ENCODE measurements at regions of chr13 and their contacts with region 1.

Region 1: DNA sequence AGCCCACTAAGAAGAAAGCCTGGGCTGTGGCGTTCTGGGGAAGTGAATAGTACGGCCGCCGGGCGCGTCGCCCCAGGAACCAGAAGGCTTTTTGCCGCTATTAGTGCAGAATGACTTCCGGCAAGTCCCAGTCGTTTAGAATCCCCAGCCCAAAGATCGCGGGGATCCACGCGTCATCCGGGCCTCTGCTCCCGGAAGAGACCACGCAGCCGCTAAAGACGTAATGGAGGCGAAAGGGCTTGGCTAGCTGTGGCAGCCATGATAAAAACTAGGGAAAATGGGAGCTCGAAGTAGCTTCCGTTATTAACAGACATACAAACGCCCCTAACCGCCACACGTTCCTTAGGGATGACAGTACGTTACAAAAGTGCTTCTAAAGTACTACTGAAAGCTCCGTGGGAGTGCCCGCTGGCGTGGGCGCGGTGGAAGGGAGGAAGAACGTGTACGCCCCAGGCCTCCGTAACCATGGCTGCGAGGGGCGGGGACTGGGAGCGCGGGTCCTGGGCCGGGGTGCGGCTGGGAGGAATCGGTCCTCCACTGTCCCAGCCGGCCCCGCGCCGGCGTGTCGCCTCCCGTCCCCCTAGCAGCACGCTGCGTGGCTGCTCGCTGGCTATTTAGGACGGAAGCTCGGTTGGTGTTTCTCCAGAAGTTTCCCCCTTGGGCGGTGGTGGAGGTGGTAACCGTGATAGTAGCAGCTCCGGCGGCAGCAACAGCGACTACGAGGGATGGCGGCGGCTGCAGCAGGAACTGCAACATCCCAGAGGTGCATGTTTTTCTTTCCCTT is at the start of gene SUGT1:
- DNase-seq: peak; percentile 97
- ATAC-seq: peak; percentile 96
- H3K4me3 Mint-ChIP-seq: no peak within 1 kb of the TSS
- H3K27ac Mint-ChIP-seq: no peak within 1 kb of the TSS
- H3K4me1 Mint-ChIP-seq: peaks cover 14% of the 10 kb centered on the region
- H3K27me3 Mint-ChIP-seq: no peaks in the 10 kb centered on the region
- total RNA-seq, gene SUGT1: 58.3 to 64.8 TPM

Region 2: DNA sequence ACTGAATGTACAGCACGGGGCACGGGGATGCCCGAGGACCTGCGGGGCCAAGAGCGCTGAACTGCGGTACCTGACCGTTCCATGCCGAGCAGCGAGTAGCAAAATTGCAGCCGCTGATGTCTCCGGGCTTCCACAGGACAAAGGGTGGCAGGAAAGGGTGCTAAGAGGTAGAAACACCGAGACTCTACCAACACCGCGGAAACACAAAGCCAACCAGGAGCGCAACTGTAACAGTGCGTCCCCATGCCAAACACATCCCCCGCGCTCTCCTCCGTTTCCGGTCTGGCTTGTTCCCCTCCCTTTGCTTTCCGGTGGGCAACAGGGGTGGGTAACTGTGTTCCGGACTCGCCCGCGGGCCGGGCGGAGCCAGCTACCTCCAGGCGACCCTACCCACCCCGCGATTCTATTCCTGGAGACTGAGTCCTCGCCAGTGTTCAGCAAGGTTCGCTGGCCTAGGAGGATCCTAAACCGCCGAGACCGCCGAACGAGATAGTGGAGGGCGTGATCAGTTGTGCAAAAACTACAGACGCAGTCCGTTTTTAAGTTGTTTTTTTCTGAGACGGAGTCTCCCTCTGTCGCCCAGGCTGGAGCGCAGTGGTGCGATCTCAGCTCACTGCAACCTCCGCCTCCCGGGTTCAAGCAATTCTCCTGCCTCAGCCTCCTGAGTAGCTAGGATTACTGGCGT is 458.1 kb before region 1 on chr13:
- CTCF ChIA-PET with region 1: no interaction called
- POLR2A ChIA-PET with region 1: no interaction called
- intact Hi-C with region 1: loop called in 1 of 2 experiments (anchors 1 kb)
- DNase-seq: peak; percentile 92
- ATAC-seq: peak; percentile 83
- H3K4me3 Mint-ChIP-seq: peak overlapping the region; percentile 86
- H3K27ac Mint-ChIP-seq: peak overlapping the region; percentile 100
- H3K4me1 Mint-ChIP-seq: peaks cover 32% of the 10 kb centered on the region
- H3K27me3 Mint-ChIP-seq: no peaks in the 10 kb centered on the region

Region 3: GRCh38 chr13:52617070-52618060 is 35.0 kb before region 1 on chr13:
- CTCF ChIA-PET with region 1: interaction called, 29 read pairs
- POLR2A ChIA-PET with region 1: interaction called, 17 read pairs
- intact Hi-C with region 1: loop called (anchors 1 kb)
- DNase-seq: peak; percentile 91
- ATAC-seq: peak; percentile 96
- H3K4me3 Mint-ChIP-seq: peak overlapping the region; percentile 95
- H3K27ac Mint-ChIP-seq: peak overlapping the region; percentile 94
- H3K4me1 Mint-ChIP-seq: peaks cover 33% of the 10 kb centered on the region
- H3K27me3 Mint-ChIP-seq: no peaks in the 10 kb centered on the region

Region 4: DNA sequence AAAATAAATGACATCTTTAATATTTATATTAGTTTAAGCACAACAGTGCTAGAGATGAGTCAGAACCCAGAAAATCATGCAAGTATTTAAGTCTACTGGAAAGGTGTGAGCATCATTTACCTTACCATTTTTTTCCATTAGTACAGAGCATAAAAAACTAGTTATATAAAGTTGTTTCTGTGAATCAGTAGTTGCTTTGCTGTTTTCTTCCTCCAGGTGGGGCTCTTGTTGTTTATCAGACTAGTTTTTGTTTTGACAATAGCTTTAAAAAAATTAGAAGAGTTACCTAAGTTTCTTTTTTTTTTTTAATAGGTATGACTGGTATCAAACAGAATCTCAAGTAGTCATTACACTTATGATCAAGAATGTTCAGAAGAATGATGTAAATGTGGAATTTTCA is 12.9 kb after region 1 on chr13:
- CTCF ChIA-PET with region 1: interaction called, 53 read pairs
- POLR2A ChIA-PET with region 1: interaction called, 5 read pairs
- intact Hi-C with region 1: no loop called
- DNase-seq: no peak
- ATAC-seq: peak; percentile 26
- H3K4me3 Mint-ChIP-seq: no peak overlapping the region
- H3K27ac Mint-ChIP-seq: no peak overlapping the region
- H3K4me1 Mint-ChIP-seq: peaks cover 4% of the 10 kb centered on the region
- H3K27me3 Mint-ChIP-seq: no peaks in the 10 kb centered on the region

Region 5: DNA sequence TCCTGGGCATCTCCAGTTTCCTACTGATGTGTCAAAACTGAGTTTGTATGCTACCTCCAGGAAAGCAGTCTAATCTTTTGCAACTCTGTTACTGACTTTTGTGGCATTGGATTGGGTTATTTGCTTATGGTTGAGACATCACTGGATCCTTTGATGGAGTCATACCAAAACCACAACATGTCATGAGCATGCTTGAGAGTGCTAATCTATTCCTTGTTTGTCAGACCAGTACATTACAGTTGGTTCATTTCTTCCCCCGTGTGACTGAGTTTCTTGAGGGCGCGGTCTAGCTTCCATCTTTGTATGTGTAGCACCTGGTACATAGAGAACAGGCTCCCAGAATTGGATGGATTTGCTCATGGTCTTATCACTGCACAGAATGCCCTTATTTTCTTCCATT is 43.5 kb after region 1 on chr13:
- CTCF ChIA-PET with region 1: no interaction called
- POLR2A ChIA-PET with region 1: no interaction called
- intact Hi-C with region 1: loop called in 1 of 2 experiments (anchors 1 kb)
- DNase-seq: peak; percentile 67
- ATAC-seq: peak; percentile 95
- H3K4me3 Mint-ChIP-seq: no peak overlapping the region
- H3K27ac Mint-ChIP-seq: peak overlapping the region; percentile 45
- H3K4me1 Mint-ChIP-seq: peaks cover 15% of the 10 kb centered on the region
- H3K27me3 Mint-ChIP-seq: no peaks in the 10 kb centered on the region

Measured in activated CD4-positive, alpha-beta T cell treated with anti-CD3 and anti-CD28 coated beads for 36 hours (primary cell).